Mammary epithelial cell (primary cell): ENCODE measurements at regions of chr12 and their contacts with region 1.

Region 1: DNA sequence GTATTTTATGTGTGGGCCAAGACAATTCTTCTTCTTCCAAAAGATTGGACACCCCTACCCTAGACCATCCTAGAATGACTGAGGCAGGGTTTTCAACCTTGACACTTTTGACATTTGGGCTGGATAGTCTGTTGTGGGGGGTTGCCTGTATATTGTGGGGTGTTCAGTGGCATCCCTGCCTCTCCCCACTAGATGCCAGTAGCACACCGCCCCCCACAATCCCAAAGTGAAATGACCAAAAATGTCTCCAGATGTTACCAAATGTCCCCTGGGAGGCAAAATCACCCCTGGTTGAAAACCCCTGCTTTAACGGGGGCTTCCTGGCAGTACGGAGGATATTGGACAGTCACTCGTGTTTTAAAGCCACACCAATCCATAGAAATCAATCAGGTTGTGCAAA is 219.6 kb downstream of the PHETA1 start:
- DNase-seq: no peak
- H3K4me3 ChIP-seq: no peak overlapping the region
- H3K27ac ChIP-seq: no peak overlapping the region
- H3K4me1 ChIP-seq: no peaks in the 10 kb centered on the region
- H3K27me3 ChIP-seq: no peaks in the 10 kb centered on the region
- CTCF ChIP-seq: no peak

Region 2: GRCh38 chr12:111102062-111102739 is 47.1 kb before region 1 on chr12:
- CTCF ChIA-PET with region 1: no interaction called
- dilution Hi-C with region 1: loop called (anchors 5 kb)
- in situ Hi-C with region 1: no loop called
- intact Hi-C with region 1: no loop called
- DNase-seq: peak; percentile 74
- H3K4me3 ChIP-seq: no peak overlapping the region
- H3K27ac ChIP-seq: no peak overlapping the region
- H3K4me1 ChIP-seq: peaks cover 12% of the 10 kb centered on the region
- H3K27me3 ChIP-seq: peaks cover 7% of the 10 kb centered on the region
- CTCF ChIP-seq: no peak

Region 3: DNA sequence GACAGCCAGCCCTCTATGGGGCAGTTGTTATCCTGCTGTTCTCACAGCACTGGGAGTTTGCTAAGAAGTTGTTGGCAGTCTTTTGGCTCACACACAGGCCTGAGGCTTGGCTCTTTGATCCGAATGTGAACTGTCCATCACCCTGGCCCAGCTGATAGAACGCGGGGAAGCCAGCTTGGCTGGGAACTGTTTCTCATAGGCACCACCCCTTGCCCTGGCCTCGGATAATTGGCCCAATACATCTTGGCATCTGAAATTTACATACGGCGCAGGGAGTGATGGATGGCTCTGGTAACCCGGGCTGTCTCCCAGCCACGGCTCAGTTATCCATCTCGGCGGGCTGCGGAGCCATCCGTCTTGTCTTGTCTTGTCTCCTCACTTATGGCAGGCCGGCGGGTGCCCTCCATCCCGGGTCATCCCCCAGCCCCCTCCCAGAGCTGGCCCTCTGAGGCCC is 55.5 kb after region 1 on chr12:
- CTCF ChIA-PET with region 1: no interaction called
- dilution Hi-C with region 1: loop called (anchors 5 kb)
- in situ Hi-C with region 1: no loop called
- intact Hi-C with region 1: no loop called
- DNase-seq: no peak
- H3K4me3 ChIP-seq: no peak overlapping the region
- H3K27ac ChIP-seq: no peak overlapping the region
- H3K4me1 ChIP-seq: no peaks in the 10 kb centered on the region
- H3K27me3 ChIP-seq: peaks cover 9% of the 10 kb centered on the region
- CTCF ChIP-seq: no peak

Region 4: GRCh38 chr12:111224186-111225066 is 75.1 kb after region 1 on chr12:
- CTCF ChIA-PET with region 1: no interaction called
- dilution Hi-C with region 1: no loop called
- in situ Hi-C with region 1: no loop called
- intact Hi-C with region 1: no loop called
- DNase-seq: no peak
- H3K4me3 ChIP-seq: no peak overlapping the region
- H3K27ac ChIP-seq: no peak overlapping the region
- H3K4me1 ChIP-seq: no peaks in the 10 kb centered on the region
- H3K27me3 ChIP-seq: no peaks in the 10 kb centered on the region
- CTCF ChIP-seq: no peak